Mammary epithelial cell (primary cell): ENCODE measurements at regions of chr3 and their contacts with region 1.

Region 1: GRCh38 chr3:43998836-43999727 is 242.6 kb upstream of the TOPAZ1 start:
- DNase-seq: peak; percentile 51
- H3K4me3 ChIP-seq: peak overlapping the region; percentile 82 to 99 (median 82)
- H3K27ac ChIP-seq: peak overlapping the region; percentile 16
- H3K4me1 ChIP-seq: peaks cover 35% of the 10 kb centered on the region
- H3K27me3 ChIP-seq: no peaks in the 10 kb centered on the region
- CTCF ChIP-seq: no peak

Region 2: GRCh38 chr3:43699864-43700263 is 299.2 kb before region 1 on chr3:
- CTCF ChIA-PET with region 1: no interaction called
- dilution Hi-C with region 1: no loop called
- in situ Hi-C with region 1: no loop called
- intact Hi-C with region 1: loop called (anchors 10 kb)
- DNase-seq: peak; percentile 37
- H3K4me3 ChIP-seq: no peak overlapping the region
- H3K27ac ChIP-seq: no peak overlapping the region
- H3K4me1 ChIP-seq: peaks cover 18% of the 10 kb centered on the region
- H3K27me3 ChIP-seq: no peaks in the 10 kb centered on the region
- CTCF ChIP-seq: peak; percentile 58 to 69

Region 3: GRCh38 chr3:43879166-43879565 is 119.9 kb before region 1 on chr3:
- CTCF ChIA-PET with region 1: no interaction called
- dilution Hi-C with region 1: no loop called
- in situ Hi-C with region 1: no loop called
- intact Hi-C with region 1: loop called (anchors 10 kb)
- DNase-seq: peak; percentile 25
- H3K4me3 ChIP-seq: no peak overlapping the region
- H3K27ac ChIP-seq: no peak overlapping the region
- H3K4me1 ChIP-seq: peaks cover 23% of the 10 kb centered on the region
- H3K27me3 ChIP-seq: no peaks in the 10 kb centered on the region
- CTCF ChIP-seq: peak; percentile 22 to 50

Region 4: DNA sequence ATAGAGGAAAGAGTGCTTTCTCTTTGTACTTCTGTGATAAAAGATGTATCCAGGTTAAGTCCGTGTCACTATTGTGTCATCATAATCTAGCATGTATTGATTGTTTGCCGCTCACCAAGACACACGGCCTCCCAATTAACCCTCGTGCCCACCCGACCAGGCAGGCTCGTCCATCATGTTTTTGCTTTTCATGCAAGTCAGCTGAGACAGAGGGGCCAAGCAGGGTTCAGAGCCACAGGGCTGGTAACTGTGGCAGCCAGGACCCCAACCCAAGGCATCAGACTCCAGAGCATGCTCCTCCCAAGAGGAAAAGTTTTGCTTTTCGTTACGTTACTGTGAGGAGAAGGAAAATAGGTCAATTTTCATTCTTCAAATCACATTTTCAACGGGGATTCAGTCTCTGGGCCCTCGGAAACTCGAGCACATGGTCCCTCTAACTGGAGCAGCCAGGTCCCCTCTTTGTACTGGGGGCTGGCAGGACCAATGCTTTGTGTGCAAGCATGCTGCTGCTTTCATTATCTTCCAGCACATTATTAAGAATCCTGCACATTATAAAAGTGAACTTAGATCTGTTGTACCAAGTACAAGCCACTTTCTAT is 81.5 kb after region 1 on chr3:
- CTCF ChIA-PET with region 1: no interaction called
- dilution Hi-C with region 1: loop called (anchors 5 kb)
- in situ Hi-C with region 1: no loop called
- intact Hi-C with region 1: no loop called
- DNase-seq: no peak
- H3K4me3 ChIP-seq: no peak overlapping the region
- H3K27ac ChIP-seq: no peak overlapping the region
- H3K4me1 ChIP-seq: no peaks in the 10 kb centered on the region
- H3K27me3 ChIP-seq: no peaks in the 10 kb centered on the region
- CTCF ChIP-seq: no peak

Region 5: GRCh38 chr3:44128057-44128775 is 129.1 kb after region 1 on chr3:
- CTCF ChIA-PET with region 1: no interaction called
- dilution Hi-C with region 1: no loop called
- in situ Hi-C with region 1: no loop called
- intact Hi-C with region 1: loop called (anchors 2 kb)
- DNase-seq: no peak
- H3K4me3 ChIP-seq: no peak overlapping the region
- H3K27ac ChIP-seq: no peak overlapping the region
- H3K4me1 ChIP-seq: peaks cover 22% of the 10 kb centered on the region
- H3K27me3 ChIP-seq: no peaks in the 10 kb centered on the region
- CTCF ChIP-seq: no peak

Region 6: GRCh38 chr3:44418549-44418948 is 419.5 kb after region 1 on chr3:
- CTCF ChIA-PET with region 1: no interaction called
- dilution Hi-C with region 1: no loop called
- in situ Hi-C with region 1: no loop called
- intact Hi-C with region 1: no loop called
- DNase-seq: no peak
- H3K4me3 ChIP-seq: no peak overlapping the region
- H3K27ac ChIP-seq: no peak overlapping the region
- H3K4me1 ChIP-seq: no peaks in the 10 kb centered on the region
- H3K27me3 ChIP-seq: no peaks in the 10 kb centered on the region
- CTCF ChIP-seq: peak; percentile 29 to 32

Region 7: DNA sequence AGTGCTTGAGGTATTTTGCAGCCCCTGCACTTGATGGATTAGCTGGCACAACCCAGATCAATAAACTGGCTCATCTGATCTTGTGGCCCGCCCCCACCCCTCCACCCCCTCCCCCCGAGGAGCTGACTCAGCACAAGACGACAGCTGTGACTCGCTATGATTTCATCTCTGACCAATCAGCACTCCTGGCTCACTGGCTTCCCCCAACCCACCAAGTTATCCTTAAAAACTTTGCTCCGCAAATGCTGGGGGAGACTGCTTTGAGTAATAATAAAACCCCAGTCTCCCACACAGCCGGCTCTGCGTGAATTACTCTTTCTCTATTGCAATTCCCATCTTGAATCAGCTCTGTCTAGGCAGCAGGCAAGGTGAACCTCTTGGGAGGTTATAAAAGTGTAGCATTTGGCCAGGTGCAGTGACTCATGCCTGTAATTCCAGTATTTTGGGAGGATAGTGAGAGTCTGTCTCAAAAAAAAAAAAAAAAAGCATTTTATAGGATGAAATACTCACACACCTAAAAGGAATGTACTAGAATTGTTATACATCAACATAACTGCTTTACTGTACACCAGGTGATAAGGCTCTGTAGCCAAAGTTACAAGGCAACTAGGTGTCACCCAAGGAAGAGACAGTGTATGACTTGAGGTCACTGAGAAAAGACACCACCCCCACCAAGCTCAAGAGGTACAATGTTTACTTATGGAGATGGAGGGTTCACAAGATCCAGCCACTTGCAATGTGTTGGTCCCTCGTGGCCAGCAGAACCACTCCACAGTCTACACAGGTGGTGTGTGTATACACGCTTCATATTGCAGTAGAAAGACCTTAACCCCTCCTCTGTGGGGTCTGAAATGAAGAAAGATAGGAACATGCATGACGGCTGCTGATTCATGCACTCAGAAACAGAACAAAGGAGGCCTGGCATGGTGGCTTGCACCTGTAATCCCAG is 469.8 kb after region 1 on chr3:
- CTCF ChIA-PET with region 1: no interaction called
- dilution Hi-C with region 1: no loop called
- in situ Hi-C with region 1: no loop called
- intact Hi-C with region 1: loop called (anchors 10 kb)
- DNase-seq: peak; percentile 85
- H3K4me3 ChIP-seq: no peak overlapping the region
- H3K27ac ChIP-seq: peak overlapping the region; percentile 56
- H3K4me1 ChIP-seq: peaks cover 20% of the 10 kb centered on the region
- H3K27me3 ChIP-seq: no peaks in the 10 kb centered on the region
- CTCF ChIP-seq: no peak